ENCODE measurements at regions of chr15 and their contacts with region 1.

Region 1: GRCh38 chr15:58987489-58988005 is at the start of gene RNF111:
- DNase-seq: peak; percentile 95
- ATAC-seq: peak; percentile 93
- H3K4me3 Mint-ChIP-seq: peak within 1 kb of the TSS; percentile 93
- H3K27ac Mint-ChIP-seq: peak within 1 kb of the TSS; percentile 89
- H3K4me1 Mint-ChIP-seq: peaks cover 38% of the 10 kb centered on the region
- H3K27me3 Mint-ChIP-seq: no peaks in the 10 kb centered on the region
- CTCF ChIP-seq: no peak
- total RNA-seq, gene RNF111: 28.5 to 30.5 TPM

Region 2: DNA sequence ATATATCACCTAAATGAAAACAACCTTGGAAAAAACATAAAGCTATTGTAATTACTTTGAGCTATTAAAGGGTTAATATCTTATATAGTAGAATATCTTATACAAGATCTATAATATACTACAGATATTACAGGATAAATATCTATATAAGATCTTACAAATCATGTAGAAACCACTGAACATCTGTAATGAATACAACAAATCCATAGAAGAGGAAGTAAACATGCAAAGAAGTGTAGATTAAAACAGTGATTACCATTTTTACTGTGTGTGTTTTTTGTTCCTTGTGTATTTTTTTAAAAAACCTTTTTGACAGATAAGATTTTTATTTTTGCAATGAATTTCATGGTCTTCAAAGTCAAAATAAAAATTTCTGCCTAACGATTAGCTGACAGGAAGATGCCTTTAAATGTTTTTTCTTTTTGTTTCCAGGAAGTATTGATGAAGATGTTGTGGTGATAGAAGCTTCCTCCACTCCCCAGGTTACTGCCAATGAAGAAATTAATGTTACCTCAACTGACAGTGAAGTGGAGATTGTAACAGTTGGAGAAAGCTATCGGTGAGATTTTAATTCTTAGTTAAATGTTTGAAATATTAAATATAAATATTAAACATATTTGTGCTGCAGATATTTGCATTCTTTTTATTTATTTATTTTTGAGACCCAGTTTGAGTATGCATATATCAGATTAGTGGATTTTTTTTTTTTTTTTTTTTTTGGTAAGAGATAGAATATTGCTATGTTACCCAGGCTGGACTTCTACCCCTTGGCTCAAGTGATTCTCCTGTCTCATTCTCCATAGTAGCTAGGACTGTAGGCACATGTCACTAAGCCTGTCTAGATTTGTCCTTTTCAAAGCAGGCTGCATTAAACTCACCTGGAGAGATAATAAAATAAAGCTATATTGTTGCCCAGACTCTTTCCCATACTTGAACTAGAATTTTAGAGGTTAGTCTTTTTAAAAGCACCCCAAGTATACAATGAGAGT is 64.6 kb after region 1 on chr15:
- CTCF ChIA-PET with region 1: no interaction called
- POLR2A ChIA-PET with region 1: no interaction called
- intact Hi-C with region 1: loop called (anchors 10 kb)
- DNase-seq: no peak
- ATAC-seq: no peak
- H3K4me3 Mint-ChIP-seq: no peak overlapping the region
- H3K27ac Mint-ChIP-seq: peak overlapping the region; percentile 34
- H3K4me1 Mint-ChIP-seq: peaks cover 23% of the 10 kb centered on the region
- H3K27me3 Mint-ChIP-seq: no peaks in the 10 kb centered on the region
- CTCF ChIP-seq: no peak